ENCODE measurements at regions of chr15 and their contacts with region 1.

Region 1: DNA sequence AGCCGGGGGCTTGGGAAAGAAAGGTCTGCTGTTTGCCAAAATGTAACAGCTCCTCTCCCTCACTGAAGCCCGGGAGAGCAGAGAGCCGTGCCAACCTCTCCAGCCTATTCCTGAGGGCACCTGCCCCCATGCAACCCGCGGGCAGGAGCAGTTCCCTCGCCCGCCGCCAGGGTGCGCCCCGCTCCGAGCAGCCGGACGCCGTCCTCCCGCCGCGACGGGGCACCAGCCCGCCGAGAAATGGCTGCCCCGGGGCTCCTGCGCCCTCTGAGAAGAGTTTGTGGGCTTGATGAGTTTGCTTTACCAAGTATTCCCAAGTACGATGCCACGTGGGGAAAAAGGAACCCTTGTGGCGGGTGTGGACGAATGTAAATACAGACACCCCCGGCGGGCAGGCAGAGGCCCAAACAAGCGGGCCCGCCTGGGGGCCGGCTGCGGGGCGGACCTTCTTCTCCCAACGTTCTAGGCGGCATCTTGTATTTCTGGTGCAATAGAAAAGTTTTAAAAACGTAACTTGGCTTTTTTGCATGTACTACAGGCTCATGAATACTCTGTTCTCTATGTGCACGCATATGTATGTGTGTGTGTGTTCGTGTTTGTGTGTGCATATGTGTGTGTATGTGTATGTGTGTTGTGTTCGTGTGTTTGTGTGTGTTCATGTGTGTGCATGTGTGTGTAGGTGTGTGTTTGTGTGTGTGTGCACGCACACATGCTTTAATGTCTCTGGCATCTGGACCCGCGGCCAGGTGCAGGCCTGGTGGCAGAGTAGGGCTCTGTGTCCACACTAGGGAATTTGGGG is 162.9 kb downstream of the CHSY1 start:
- DNase-seq: peak; percentile 87
- ATAC-seq: peak; percentile 63

Region 2: GRCh38 chr15:101258238-101259144 is 169.5 kb after region 1 on chr15:
- intact Hi-C with region 1: loop called (anchors 5 kb)
- DNase-seq: no peak
- ATAC-seq: peak; percentile 73

Region 3: DNA sequence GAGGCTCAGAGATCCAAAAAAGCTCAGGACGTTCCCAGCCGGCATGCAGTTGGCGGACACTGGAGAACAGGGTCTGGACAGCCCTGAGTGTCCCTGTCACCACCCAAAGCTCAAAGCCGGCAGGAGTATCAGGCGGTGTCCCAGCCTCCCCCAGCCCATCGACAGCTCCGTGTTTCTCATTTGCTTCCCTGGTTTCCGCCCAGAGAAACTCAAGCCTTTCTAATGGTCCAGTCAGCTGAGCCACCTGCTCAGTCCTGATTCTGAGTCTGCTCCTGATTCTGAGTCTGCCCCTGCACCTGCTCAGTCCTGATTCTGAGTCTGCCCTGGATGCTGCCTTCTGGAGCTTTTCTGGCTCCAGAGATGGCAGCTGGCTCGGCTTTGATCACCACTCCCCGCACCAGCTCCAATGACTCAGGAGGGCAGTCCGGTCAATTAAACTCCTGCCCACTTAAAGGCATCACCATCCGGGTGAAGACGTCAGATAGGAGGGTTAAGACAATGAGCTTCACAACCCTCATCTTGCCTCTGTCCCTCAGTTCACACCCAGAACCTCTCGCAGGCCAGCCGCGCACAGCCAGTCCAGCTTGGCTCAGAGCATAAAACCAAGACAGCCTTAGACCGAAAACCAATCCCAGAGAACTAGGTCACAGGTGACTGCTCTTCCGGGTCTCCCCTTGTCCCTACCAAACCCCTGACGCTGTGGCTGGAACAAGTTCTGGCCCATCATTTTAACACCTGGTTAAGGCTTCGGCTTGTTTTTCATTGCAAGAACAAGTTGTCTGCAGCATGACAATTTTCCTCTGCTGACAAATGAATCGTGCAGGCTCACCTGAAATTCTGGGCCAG is 393.8 kb after region 1 on chr15:
- intact Hi-C with region 1: no loop called
- DNase-seq: no peak
- ATAC-seq: no peak